Activated naive CD4-positive, alpha-beta T cell treated with anti-CD3 and anti-CD28 coated beads for 36 hours (primary cell): ENCODE measurements at regions of chr9 and their contacts with region 1.

Region 1: GRCh38 chr9:15873569-15874177 is 320.8 kb downstream of the CCDC171 start:
- DNase-seq: no peak
- H3K4me3 Mint-ChIP-seq: no peak overlapping the region
- H3K27ac Mint-ChIP-seq: no peak overlapping the region
- H3K4me1 Mint-ChIP-seq: no peaks in the 10 kb centered on the region
- H3K27me3 Mint-ChIP-seq: no peaks in the 10 kb centered on the region

Region 2: GRCh38 chr9:16058131-16058549 is 184.5 kb after region 1 on chr9:
- CTCF ChIA-PET with region 1: no interaction called
- intact Hi-C with region 1: no loop called
- DNase-seq: peak; percentile 12
- H3K4me3 Mint-ChIP-seq: peak overlapping the region; percentile 25
- H3K27ac Mint-ChIP-seq: no peak overlapping the region
- H3K4me1 Mint-ChIP-seq: peaks cover 25% of the 10 kb centered on the region
- H3K27me3 Mint-ChIP-seq: no peaks in the 10 kb centered on the region

Region 3: DNA sequence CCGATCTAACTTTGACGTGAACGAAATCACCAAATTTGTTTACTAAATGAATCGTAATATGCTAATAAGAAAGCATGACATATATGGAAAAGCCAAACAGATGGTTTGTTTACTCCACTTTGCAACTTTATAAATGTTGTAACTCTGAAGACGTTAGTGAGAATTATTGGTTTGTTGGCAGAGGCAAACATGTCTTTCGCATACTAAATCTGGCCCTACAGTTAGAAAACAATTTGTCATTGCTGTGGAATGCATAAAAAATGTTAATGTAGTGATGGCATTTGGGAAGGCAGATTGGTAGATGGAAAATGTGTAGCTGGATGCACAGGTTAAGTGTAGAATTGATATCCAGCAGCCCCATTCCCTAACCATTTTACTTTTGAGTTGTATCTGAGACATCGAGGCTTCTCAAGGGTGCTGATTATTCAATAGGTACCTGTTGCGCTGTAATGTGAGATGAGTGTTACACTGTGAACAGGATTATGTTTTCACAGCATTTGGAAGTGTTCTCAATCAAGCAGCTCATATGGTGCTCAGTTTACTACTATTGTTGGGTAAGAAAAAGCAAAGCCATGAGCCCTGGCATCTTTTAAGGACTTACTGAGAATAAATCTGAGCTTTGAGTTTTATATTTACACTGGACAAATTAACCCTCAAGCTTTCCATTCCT is 552.0 kb after region 1 on chr9:
- CTCF ChIA-PET with region 1: no interaction called
- intact Hi-C with region 1: loop called (anchors 10 kb)
- DNase-seq: no peak
- H3K4me3 Mint-ChIP-seq: no peak overlapping the region
- H3K27ac Mint-ChIP-seq: no peak overlapping the region
- H3K4me1 Mint-ChIP-seq: no peaks in the 10 kb centered on the region
- H3K27me3 Mint-ChIP-seq: no peaks in the 10 kb centered on the region

Region 4: DNA sequence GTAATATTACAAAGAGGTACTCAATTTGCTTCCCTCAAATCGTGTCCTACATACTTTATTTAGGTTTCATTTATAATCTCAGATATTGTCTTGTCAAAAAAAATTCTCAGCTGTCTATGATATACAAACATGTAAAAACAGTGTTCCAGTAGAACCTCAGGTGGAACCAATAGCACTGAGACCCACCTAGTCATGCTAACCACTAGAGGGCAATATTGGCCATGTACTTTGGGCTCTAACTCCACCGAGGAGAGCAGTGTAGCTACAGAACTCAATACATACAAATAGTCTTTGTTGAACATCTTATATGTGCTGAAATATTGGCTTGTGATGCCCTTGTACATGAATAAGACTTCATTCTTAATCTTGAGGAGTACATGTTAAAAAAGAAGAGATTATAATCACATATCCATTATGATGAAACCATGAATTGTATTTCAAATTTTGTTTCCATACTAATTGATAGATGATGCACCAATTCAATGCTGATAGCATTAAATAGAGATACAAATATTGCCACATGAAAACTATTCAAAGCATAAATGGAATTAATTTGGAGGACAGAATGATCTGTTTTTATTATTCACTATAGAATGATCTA is 1190.0 kb after region 1 on chr9:
- CTCF ChIA-PET with region 1: no interaction called
- intact Hi-C with region 1: loop called (anchors 10 kb)
- DNase-seq: peak; percentile 6
- H3K4me3 Mint-ChIP-seq: no peak overlapping the region
- H3K27ac Mint-ChIP-seq: no peak overlapping the region
- H3K4me1 Mint-ChIP-seq: no peaks in the 10 kb centered on the region
- H3K27me3 Mint-ChIP-seq: peaks cover 2% of the 10 kb centered on the region